Activated T-helper 1 cell treated with anti-CD3 and anti-CD28 coated beads, Interleukin-12 subunit alpha, Interleukin-12 subunit beta, Interleukin-2, Interleukin-4 antibody, amounts not matched to agents 30 ng/mL and 10 ng/mL and 1 ng/mL, durations not matched to agents 14 hours and 24 hours and 36 hours (primary cell): ENCODE measurements at regions of chr15 and their contacts with region 1.

Region 1: GRCh38 chr15:66386204-66387123 is at the start of gene MAP2K1:
- DNase-seq: peak; percentile 98
- H3K4me3 Mint-ChIP-seq: peak within 1 kb of the TSS; percentile 99
- H3K27ac Mint-ChIP-seq: peak within 1 kb of the TSS; percentile 99
- H3K4me1 Mint-ChIP-seq: peaks cover 52% of the 10 kb centered on the region
- H3K27me3 Mint-ChIP-seq: no peaks in the 10 kb centered on the region
- total RNA-seq, gene MAP2K1: 82.5 and 86.6 TPM in 2 replicates

Region 2: GRCh38 chr15:65049418-65049840 is 1337.0 kb before region 1 on chr15:
- intact Hi-C with region 1: loop called (anchors 2 kb)
- DNase-seq: peak; percentile 84
- H3K4me3 Mint-ChIP-seq: peak overlapping the region; percentile 57
- H3K27ac Mint-ChIP-seq: peak overlapping the region; percentile 36
- H3K4me1 Mint-ChIP-seq: peaks cover 15% of the 10 kb centered on the region
- H3K27me3 Mint-ChIP-seq: peaks cover 2% of the 10 kb centered on the region

Region 3: GRCh38 chr15:66369773-66370651 is 16.5 kb before region 1 on chr15:
- intact Hi-C with region 1: loop called (anchors 1 kb)
- DNase-seq: peak; percentile 34
- H3K4me3 Mint-ChIP-seq: peak overlapping the region; percentile 78
- H3K27ac Mint-ChIP-seq: peak overlapping the region; percentile 97
- H3K4me1 Mint-ChIP-seq: peaks cover 24% of the 10 kb centered on the region
- H3K27me3 Mint-ChIP-seq: no peaks in the 10 kb centered on the region

Region 4: GRCh38 chr15:66401130-66402021 is 14.9 kb after region 1 on chr15:
- intact Hi-C with region 1: loop called (anchors 2 kb)
- DNase-seq: no peak
- H3K4me3 Mint-ChIP-seq: peak overlapping the region; percentile 76
- H3K27ac Mint-ChIP-seq: peak overlapping the region; percentile 75
- H3K4me1 Mint-ChIP-seq: peaks cover 74% of the 10 kb centered on the region
- H3K27me3 Mint-ChIP-seq: no peaks in the 10 kb centered on the region

Region 5: DNA sequence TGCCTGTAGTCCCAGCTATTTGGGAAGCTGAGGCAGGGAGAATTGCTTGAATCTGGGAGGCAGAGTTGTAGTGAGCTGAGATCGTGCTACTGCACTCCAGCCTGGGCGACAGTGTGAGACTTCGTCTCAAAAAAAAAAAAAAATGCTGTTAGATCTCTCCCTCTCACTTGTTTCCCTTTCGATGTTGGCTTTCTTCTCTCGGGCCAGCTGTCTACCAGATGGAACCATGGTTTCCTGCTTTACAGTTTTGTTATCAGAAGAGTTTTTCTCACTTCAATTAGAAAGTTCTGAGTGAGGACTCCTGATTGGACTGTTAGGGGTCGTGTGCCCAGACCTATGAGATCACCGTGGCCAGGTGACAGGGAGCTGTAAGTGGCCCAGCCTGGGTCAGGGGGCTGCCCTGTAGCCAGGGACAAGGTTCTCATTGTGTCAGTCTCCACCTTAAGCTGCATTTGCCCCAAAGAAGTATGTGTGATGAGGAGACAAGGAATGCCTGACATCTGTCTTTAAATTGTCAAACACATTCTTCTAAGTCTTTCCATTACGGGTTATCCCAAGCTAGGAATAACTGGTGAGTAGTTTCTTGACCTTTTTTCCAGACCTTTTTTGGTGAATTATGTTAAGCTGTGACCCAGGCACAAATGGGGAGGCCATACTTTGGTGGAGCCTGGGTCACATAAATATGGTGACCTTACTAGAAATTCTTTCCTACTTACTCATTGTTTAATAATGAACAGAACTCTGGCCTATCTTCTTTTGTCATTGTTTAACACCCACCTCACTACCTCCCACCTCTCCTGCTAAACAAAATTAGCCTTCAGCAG is 85.9 kb after region 1 on chr15:
- intact Hi-C with region 1: loop called (anchors 1 kb)
- DNase-seq: peak; percentile 52
- H3K4me3 Mint-ChIP-seq: peak overlapping the region; percentile 1
- H3K27ac Mint-ChIP-seq: peak overlapping the region; percentile 80
- H3K4me1 Mint-ChIP-seq: peaks cover 61% of the 10 kb centered on the region
- H3K27me3 Mint-ChIP-seq: no peaks in the 10 kb centered on the region

Region 6: DNA sequence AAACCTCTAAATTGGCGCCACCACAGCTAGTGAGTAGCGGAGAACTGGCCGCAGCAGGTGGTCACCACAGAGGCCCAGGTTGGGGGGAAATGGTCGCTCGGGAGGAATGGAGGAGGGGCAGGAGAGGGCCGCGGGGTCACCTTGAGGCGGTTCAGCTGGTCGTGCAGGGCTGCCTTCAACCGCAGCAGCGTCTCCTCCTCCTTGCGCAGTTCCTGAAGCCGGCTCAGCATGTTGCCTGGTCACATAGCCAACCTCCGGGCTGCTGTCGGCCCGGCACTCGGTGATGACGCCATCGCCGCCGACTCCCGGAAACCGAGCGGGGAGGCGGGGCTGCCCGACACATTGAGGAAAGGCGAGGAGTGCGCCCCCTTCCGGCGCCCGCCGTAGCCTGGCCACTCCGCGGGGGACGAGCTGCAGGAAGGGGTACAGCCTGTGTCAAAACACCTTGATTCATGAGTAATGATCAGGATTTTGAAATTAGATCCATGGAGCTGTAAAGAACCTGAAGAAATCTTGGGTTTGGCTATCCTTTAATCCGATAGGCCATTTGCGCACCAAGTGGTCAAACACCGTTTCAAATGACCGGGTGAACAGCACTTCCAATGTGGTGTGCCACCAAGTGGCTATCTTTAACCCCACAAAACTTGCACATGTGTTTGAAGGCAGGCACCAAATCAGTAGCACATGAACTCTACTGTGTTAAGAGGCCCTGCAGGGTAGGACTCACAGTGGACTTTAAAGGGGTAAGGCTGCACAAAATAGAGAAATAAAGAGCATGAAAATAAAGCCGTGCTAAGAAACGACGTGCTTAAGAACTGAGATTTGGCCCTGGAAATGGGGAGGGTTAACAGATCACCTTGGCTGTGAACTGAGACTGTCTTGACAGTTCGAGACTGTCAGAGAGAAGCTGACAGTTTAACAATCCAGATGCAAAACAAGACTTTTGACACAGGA is 111.3 kb after region 1 on chr15 and contains the start of gene SNAPC5:
- intact Hi-C with region 1: loop called (anchors 1 kb)
- DNase-seq: peak; percentile 97
- H3K4me3 Mint-ChIP-seq: peak within 1 kb of the TSS; percentile 98
- H3K27ac Mint-ChIP-seq: peak within 1 kb of the TSS; percentile 94
- H3K4me1 Mint-ChIP-seq: peaks cover 52% of the 10 kb centered on the region
- H3K27me3 Mint-ChIP-seq: no peaks in the 10 kb centered on the region
- total RNA-seq, gene SNAPC5: 37.3 and 39.0 TPM in 2 replicates

Region 7: DNA sequence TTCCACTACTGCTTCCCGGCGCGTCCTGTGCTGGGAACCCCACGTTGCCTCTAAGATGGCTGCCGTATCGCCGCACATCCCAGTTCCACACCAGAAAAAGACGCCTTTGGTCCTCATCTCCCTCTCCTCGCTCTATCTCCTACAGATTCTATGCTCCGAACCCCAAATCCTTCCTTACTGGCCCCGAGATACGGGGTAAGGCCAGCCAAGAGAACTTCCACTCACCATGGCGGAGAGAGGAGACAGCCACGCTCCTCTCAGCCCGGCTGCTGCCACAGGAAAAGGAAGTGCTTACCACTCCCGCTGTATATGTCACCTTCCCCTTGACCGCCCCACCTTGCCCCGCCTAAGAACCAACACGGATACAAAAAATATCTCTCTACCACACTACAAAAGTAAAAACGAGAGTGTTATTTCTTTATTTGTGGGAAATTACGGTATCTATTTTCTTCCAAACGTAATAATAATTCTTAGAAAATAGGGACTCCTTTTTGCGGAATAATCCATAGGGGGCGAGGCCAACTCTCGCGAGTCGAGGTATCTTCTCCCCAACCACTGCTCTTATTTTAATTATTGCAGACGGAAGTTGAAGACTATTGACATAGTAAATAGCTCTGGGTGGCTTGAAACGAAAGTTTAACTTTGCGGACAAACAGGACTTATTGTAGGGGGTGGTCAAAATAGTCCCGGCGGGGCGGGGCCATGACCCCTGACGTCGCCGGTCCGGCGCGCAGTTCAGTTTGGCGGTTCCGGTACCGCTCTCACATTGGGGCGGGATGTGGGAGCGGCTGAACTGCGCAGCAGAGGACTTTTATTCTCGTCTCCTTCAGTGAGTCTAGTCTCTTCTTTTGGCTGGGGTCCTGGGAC is 118.3 kb after region 1 on chr15 and contains the starts of genes RPL4 and ZWILCH:
- intact Hi-C with region 1: loop called (anchors 1 kb)
- DNase-seq: peak; percentile 77
- H3K4me3 Mint-ChIP-seq: peak within 1 kb of the TSS; percentile 99
- H3K27ac Mint-ChIP-seq: peak within 1 kb of the TSS; percentile 99
- H3K4me1 Mint-ChIP-seq: peaks cover 55% of the 10 kb centered on the region
- H3K27me3 Mint-ChIP-seq: no peaks in the 10 kb centered on the region
- total RNA-seq, gene RPL4: 3,069 and 3,091 TPM in 2 replicates
- total RNA-seq, gene ZWILCH: 37.5 and 42.2 TPM in 2 replicates